HCT116 (cell line): ENCODE measurements at regions of chr6 and their contacts with region 1.

Region 1: DNA sequence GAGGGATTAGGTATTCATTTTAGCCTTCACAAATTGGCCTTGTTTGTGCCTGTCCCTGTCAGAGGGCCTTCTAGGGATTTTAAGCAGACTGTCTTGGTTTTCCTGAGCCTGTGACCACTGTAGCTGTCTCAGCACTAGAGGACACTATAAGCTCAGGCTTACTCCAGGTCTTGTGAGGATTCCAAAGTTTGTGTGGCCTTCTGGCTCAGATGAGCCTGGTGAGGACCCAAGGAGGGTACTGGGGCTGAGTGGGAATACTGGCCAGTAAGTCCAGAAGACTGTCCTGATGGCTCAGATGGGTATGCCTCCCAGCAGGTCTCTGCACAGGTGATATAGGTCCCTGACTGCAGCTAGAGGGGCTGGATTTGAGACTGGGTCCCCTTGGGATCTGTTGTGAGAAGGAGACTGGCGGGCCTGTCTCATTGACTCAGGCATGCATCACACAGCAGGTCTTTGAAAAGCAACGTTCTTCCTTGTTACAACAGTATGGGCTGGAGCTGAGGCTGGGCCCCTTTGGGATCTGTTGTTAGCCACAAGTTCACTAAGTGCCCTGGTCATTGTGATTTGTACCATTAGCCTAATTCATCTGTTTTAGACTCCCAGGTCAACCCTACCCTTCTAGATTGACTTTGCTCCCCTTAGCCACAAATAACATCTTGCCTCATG is 26.3 kb upstream of the TFB1M start:
- DNase-seq: peak; percentile 16
- ATAC-seq: peak; percentile 70
- H3K4me3 ChIP-seq: no peak overlapping the region
- H3K27ac ChIP-seq: no peak overlapping the region
- H3K4me1 ChIP-seq: no peaks in the 10 kb centered on the region
- H3K27me3 ChIP-seq: no peaks in the 10 kb centered on the region
- CTCF ChIP-seq: peak in 2 of 3 experiments; percentile 24 to 38; a peak in 2 of 6 replicates
- POLR2A ChIP-seq: no peak
- RAD21 ChIP-seq: peak; percentile 63

Region 2: DNA sequence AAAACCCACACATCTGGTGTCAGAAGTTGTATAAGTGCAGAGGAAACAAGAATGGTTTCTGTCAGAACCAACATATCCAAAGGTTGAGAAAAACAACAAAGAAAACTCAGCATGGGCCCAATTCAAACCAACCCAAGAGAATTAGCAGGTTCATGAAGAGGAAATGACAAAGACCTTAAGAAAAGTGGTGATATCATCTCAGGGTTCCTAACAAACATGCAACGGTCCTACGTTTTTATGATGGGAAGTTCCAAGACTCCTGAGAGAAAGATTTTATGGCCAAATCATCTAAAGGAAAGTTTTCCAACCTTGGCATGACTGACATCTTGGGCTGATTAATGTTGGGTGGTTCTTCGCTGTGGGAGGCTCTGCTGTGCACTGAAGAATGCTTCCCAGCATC is 49.3 kb before region 1 on chr6:
- CTCF ChIA-PET with region 1: no interaction called
- POLR2A ChIA-PET with region 1: no interaction called
- RAD21 ChIA-PET with region 1: no interaction called
- intact Hi-C with region 1: no loop called
- DNase-seq: no peak
- ATAC-seq: no peak
- H3K4me3 ChIP-seq: no peak overlapping the region
- H3K27ac ChIP-seq: no peak overlapping the region
- H3K4me1 ChIP-seq: peaks cover 7 to 8% of the 10 kb centered on the region in 2 experiments
- H3K27me3 ChIP-seq: no peaks in the 10 kb centered on the region
- CTCF ChIP-seq: no peak
- POLR2A ChIP-seq: no peak
- RAD21 ChIP-seq: no peak

Region 3: GRCh38 chr6:155530219-155530834 is 189.7 kb after region 1 on chr6:
- CTCF ChIA-PET with region 1: no interaction called
- POLR2A ChIA-PET with region 1: no interaction called
- RAD21 ChIA-PET with region 1: no interaction called
- intact Hi-C with region 1: loop called (anchors 1 kb)
- DNase-seq: peak; percentile 27
- ATAC-seq: peak; percentile 79
- H3K4me3 ChIP-seq: no peak overlapping the region
- H3K27ac ChIP-seq: no peak overlapping the region
- H3K4me1 ChIP-seq: peaks cover 0 to 3% of the 10 kb centered on the region in 2 experiments; a peak in 2 of 4 replicates
- H3K27me3 ChIP-seq: no peaks in the 10 kb centered on the region
- CTCF ChIP-seq: peak; percentile 63 to 70 (median 69); a peak in 5 of 6 replicates
- POLR2A ChIP-seq: no peak
- RAD21 ChIP-seq: peak; percentile 81